ENCODE measurements at regions of chr19 and their contacts with region 1.

Region 1: GRCh38 chr19:58002384-58003173 is at the start of gene ZNF606:
- DNase-seq: peak; percentile 72 to 93 (median 84)
- ATAC-seq: peak; percentile 94
- H3K4me3 ChIP-seq: peak within 1 kb of the TSS; percentile 90 to 93
- H3K4me3 Mint-ChIP-seq: peak within 1 kb of the TSS; percentile 87
- H3K27ac ChIP-seq: peak within 1 kb of the TSS; percentile 82 to 93
- H3K27ac Mint-ChIP-seq: peak within 1 kb of the TSS; percentile 94
- H3K4me1 ChIP-seq: peaks cover 20% of the 10 kb centered on the region
- H3K4me1 Mint-ChIP-seq: peaks cover 34% of the 10 kb centered on the region
- H3K27me3 ChIP-seq: no peaks in the 10 kb centered on the region
- H3K27me3 Mint-ChIP-seq: no peaks in the 10 kb centered on the region
- CTCF ChIP-seq: no peak
- total RNA-seq, gene ZNF606: 11.2 to 13.0 TPM

Region 2: GRCh38 chr19:57682226-57682766 is 320.3 kb before region 1 on chr19:
- CTCF ChIA-PET with region 1: no interaction called
- POLR2A ChIA-PET with region 1: no interaction called
- intact Hi-C with region 1: loop called in 1 of 2 experiments (anchors 2 kb)
- DNase-seq: no peak
- ATAC-seq: no peak
- H3K4me3 ChIP-seq: peak overlapping the region; percentile 91 to 94
- H3K4me3 Mint-ChIP-seq: peak overlapping the region; percentile 98
- H3K27ac ChIP-seq: peak overlapping the region; percentile 69 to 71
- H3K27ac Mint-ChIP-seq: peak overlapping the region; percentile 97
- H3K4me1 ChIP-seq: peaks cover 19% of the 10 kb centered on the region
- H3K4me1 Mint-ChIP-seq: peaks cover 36% of the 10 kb centered on the region
- H3K27me3 ChIP-seq: peaks cover 0 to 2% of the 10 kb centered on the region in 2 experiments
- H3K27me3 Mint-ChIP-seq: peaks cover 7% of the 10 kb centered on the region
- CTCF ChIP-seq: no peak

Region 3: DNA sequence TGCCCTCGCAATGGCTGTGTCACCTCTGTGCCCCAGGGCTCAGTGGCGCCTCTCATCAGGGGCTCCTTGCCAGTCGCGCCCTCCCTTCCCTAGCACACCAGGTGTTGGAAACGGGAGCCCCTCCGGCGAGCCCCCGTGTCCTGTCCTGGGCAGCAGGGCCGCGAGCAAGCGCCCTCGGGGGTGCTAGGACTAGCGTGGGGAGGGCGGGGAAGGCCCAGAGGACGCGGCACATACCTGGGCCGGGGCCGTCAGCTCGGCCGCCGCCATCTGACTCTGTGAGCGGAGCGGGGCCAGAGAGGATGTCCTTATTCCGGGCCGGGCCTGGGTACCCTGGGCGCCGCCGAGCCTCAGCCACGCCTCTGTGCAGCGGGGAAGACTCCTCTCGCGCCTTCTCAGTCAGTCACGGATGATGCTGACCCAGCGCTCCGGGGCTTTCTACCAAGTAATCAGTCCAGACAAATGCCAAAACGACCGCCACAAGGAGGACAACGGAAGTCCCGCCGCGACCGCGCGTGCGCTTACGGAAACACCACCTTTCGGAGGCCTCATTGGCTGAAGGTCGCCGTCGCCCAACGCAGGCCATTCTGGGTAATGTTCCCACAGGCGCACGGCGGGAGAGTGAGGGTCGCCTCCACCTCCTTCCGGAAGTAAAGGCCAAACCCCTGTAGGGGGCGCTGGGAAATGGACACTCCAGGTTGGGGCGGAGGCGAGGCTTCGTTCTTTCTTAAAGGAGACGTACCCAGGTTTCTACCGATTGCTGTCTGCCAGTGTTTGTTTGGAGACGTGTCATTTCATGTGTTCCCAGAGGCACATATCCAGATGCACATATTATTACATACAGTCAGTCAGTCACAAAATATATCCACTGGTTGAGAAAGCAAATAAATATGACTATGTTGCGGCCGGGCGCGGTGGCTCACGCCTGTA is 55.1 kb before region 1 on chr19 and contains the start of gene ZNF256:
- CTCF ChIA-PET with region 1: no interaction called
- POLR2A ChIA-PET with region 1: interaction called, 4 read pairs
- intact Hi-C with region 1: loop called in 1 of 2 experiments (anchors 1 kb)
- DNase-seq: peak; percentile 72 to 92 (median 86)
- ATAC-seq: peak; percentile 91
- H3K4me3 ChIP-seq: peak within 1 kb of the TSS; percentile 93 to 97
- H3K4me3 Mint-ChIP-seq: peak within 1 kb of the TSS; percentile 93
- H3K27ac ChIP-seq: peak within 1 kb of the TSS; percentile 76 to 90
- H3K27ac Mint-ChIP-seq: peak within 1 kb of the TSS; percentile 95
- H3K4me1 ChIP-seq: peaks cover 16% of the 10 kb centered on the region
- H3K4me1 Mint-ChIP-seq: peaks cover 20% of the 10 kb centered on the region
- H3K27me3 ChIP-seq: no peaks in the 10 kb centered on the region
- H3K27me3 Mint-ChIP-seq: no peaks in the 10 kb centered on the region
- CTCF ChIP-seq: peak; percentile 44
- total RNA-seq, gene ZNF256: 18.3 to 21.0 TPM

Region 4: DNA sequence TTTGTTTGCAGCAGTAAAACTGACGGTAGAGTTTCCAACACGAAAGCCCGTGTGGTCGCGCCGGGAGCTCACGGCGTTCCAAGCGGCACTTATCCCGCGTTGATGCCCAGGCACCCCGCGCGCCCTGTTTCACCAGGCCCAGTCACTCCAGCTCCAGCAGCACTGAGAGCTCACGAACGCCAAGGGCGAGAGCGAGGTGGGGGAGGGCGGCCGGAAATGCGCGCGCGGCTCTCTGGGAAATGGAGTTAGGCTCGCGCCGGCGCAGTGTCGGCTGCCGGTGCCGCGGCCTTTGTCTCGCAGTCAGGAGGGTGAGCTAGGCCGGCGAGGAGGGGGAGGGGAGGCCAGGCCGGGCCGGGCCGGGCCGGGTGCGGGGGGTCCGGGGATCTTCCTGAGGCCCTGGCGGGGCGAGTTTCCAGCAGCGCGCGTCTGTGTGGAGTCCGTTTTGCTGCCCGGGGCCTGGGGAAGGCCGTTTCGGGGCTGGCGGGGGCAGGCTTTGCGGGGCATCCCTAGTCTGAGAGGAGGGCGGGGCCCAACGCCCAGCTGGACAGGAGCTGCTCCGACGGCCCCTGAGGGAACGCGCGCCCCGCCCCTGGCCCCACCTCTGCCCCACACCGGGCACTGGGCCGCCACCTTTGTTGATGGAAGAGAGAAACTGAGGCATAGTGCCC is 56.6 kb after region 1 on chr19 and contains the start of gene ZNF135:
- CTCF ChIA-PET with region 1: no interaction called
- POLR2A ChIA-PET with region 1: interaction called, 3 read pairs
- intact Hi-C with region 1: loop called in 1 of 2 experiments (anchors 1 kb)
- DNase-seq: peak; percentile 32 to 79 (median 65)
- ATAC-seq: peak; percentile 95
- H3K4me3 ChIP-seq: peak within 1 kb of the TSS; percentile 44 to 48
- H3K4me3 Mint-ChIP-seq: peak within 1 kb of the TSS; percentile 82
- H3K27ac ChIP-seq: peak within 1 kb of the TSS; percentile 37 to 59
- H3K27ac Mint-ChIP-seq: peak within 1 kb of the TSS; percentile 90
- H3K4me1 ChIP-seq: no peaks in the 10 kb centered on the region
- H3K4me1 Mint-ChIP-seq: peaks cover 5% of the 10 kb centered on the region
- H3K27me3 ChIP-seq: peaks cover 0 to 6% of the 10 kb centered on the region in 2 experiments
- H3K27me3 Mint-ChIP-seq: peaks cover 16% of the 10 kb centered on the region
- CTCF ChIP-seq: no peak
- total RNA-seq, gene ZNF135: 1.2 to 1.4 TPM

Region 5: DNA sequence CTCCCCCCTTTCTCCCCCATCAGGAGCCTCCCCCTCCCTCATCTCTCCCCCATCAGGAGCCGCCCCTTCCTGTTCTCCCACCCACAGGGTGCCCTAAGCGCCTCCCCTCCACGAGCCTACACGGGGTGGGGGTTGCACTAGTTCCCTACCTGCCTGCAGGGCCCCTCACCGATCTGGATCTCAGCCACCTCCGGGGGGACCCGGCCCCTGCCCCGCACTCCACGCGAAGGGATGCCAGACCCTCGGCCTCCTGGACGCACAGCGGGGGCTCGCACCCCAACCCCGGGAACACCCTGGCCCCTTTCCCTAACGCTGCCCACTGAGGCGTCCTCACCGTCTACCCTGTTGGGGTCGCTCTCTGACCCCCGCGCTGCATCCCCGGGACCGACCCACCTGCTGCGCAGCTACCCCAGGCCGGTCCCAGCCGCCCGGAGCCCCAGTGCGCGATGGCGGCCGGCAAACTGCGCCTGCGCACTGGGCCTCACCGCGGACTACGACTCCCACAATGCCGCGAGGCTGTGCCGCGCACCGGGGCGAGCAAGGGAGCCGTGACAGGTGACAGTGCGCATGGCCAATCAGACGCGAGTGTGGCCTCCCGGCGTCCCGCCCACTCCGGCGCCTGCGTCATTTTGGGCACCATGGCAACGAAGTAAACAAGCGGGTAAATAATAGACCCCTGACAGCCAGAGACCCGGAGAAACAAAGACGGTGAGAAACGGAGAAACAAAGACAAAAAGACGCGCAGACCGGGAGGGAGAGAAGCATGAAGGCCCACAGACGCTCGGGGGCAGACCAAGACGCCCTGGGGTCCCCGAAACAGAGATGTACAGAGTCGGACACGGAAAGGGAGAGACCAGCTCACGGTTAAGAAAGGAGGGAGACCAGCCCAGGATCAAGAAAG is 95.5 kb after region 1 on chr19 and contains the start of gene ZSCAN18:
- CTCF ChIA-PET with region 1: no interaction called
- POLR2A ChIA-PET with region 1: interaction called, 6 read pairs
- intact Hi-C with region 1: loop called (anchors 1 to 2 kb)
- DNase-seq: peak; percentile 90 to 99 (median 97)
- ATAC-seq: peak; percentile 95
- H3K4me3 ChIP-seq: peak within 1 kb of the TSS; percentile 90 to 98
- H3K4me3 Mint-ChIP-seq: peak within 1 kb of the TSS; percentile 88
- H3K27ac ChIP-seq: peak within 1 kb of the TSS; percentile 97 to 100
- H3K27ac Mint-ChIP-seq: peak within 1 kb of the TSS; percentile 100
- H3K4me1 ChIP-seq: peaks cover 12% of the 10 kb centered on the region
- H3K4me1 Mint-ChIP-seq: peaks cover 18% of the 10 kb centered on the region
- H3K27me3 ChIP-seq: no peaks in the 10 kb centered on the region
- H3K27me3 Mint-ChIP-seq: no peaks in the 10 kb centered on the region
- CTCF ChIP-seq: no peak
- total RNA-seq, gene ZSCAN18: 57.6 to 61.0 TPM

Region 6: GRCh38 chr19:58182989-58183816 is 180.6 kb after region 1 on chr19 and contains the start of gene ZNF274:
- CTCF ChIA-PET with region 1: no interaction called
- POLR2A ChIA-PET with region 1: interaction called, 15 read pairs
- intact Hi-C with region 1: no loop called
- DNase-seq: peak; percentile 88 to 96 (median 94)
- ATAC-seq: peak; percentile 86
- H3K4me3 ChIP-seq: peak within 1 kb of the TSS; percentile 90 to 94
- H3K4me3 Mint-ChIP-seq: peak within 1 kb of the TSS; percentile 91
- H3K27ac ChIP-seq: peak within 1 kb of the TSS; percentile 99 to 100
- H3K27ac Mint-ChIP-seq: peak within 1 kb of the TSS; percentile 100
- H3K4me1 ChIP-seq: peaks cover 9% of the 10 kb centered on the region
- H3K4me1 Mint-ChIP-seq: peaks cover 22% of the 10 kb centered on the region
- H3K27me3 ChIP-seq: no peaks in the 10 kb centered on the region
- H3K27me3 Mint-ChIP-seq: no peaks in the 10 kb centered on the region
- CTCF ChIP-seq: no peak
- total RNA-seq, gene ZNF274: 52.7 to 58.9 TPM